SK-N-SH (cell line): ENCODE measurements at regions of chr1 and their contacts with region 1.

Region 1: GRCh38 chr1:48202030-48202752 is 20.3 kb upstream of the SLC5A9 start:
- DNase-seq: peak; percentile 63
- H3K4me3 ChIP-seq: peak overlapping the region in 1 of 2 experiments; percentile 49; a peak in 1 of 4 replicates
- H3K27ac ChIP-seq: no peak overlapping the region
- H3K4me1 ChIP-seq: no peaks in the 10 kb centered on the region
- H3K27me3 ChIP-seq: peaks cover 4% of the 10 kb centered on the region; the same call in 1 of the 2 replicates
- CTCF ChIP-seq: peak; percentile 91
- EP300 ChIP-seq: no peak
- RAD21 ChIP-seq: peak; percentile 82

Region 2: GRCh38 chr1:47738560-47739182 is 463.5 kb before region 1 on chr1:
- CTCF ChIA-PET with region 1: interaction called, 11 read pairs
- POLR2A ChIA-PET with region 1: no interaction called
- DNase-seq: peak; percentile 74
- H3K4me3 ChIP-seq: no peak overlapping the region; a peak in 1 of 4 replicates
- H3K27ac ChIP-seq: no peak overlapping the region
- H3K4me1 ChIP-seq: no peaks in the 10 kb centered on the region
- H3K27me3 ChIP-seq: no peaks in the 10 kb centered on the region
- CTCF ChIP-seq: peak; percentile 70
- EP300 ChIP-seq: no peak
- RAD21 ChIP-seq: peak; percentile 89

Region 3: DNA sequence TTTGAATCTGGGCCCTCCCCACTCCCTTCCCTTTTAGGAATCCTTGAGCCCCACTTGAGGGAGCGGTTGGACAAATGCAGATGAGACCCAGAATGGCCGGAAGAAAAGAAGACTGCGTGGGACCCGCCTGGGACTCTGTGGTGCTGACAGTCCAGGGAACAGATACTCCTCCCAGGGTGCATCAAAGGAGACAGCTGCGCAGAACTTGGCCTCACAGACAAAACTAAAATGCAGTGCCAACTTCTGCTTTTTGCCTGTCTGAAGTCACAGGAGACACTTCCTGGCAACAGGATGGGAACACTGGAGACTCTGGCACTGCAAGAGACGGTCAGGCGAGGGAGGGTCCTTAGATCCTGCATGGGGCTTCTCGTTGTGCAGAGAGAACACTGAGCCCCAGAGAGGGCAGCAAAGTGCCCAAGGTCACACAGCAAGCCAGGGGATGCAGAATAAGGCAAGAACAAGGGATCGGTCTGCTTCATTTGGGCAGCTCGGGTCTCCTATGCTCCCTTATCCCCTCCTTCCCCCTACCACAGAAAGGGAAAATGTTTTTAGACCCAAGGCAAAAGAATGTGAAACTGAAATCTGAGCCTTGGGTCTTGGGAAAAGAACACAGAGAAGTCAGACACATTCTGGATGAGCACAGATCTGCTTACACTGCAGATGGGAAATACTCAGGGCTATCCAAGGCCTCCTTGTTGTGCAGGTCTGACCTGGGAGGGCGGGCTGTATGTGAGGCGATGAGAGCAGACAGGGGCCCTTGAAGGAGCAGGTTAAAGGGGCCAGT is 387.4 kb before region 1 on chr1:
- CTCF ChIA-PET with region 1: no interaction called
- POLR2A ChIA-PET with region 1: no interaction called
- DNase-seq: no peak
- H3K4me3 ChIP-seq: no peak overlapping the region
- H3K27ac ChIP-seq: no peak overlapping the region
- H3K4me1 ChIP-seq: peaks cover 0 to 10% of the 10 kb centered on the region in 2 experiments; a peak in 1 of 4 replicates
- H3K27me3 ChIP-seq: no peaks in the 10 kb centered on the region
- CTCF ChIP-seq: no peak
- EP300 ChIP-seq: no peak
- RAD21 ChIP-seq: no peak

Region 4: GRCh38 chr1:47894713-47895537 is 307.3 kb before region 1 on chr1:
- CTCF ChIA-PET with region 1: no interaction called
- POLR2A ChIA-PET with region 1: no interaction called
- DNase-seq: no peak
- H3K4me3 ChIP-seq: no peak overlapping the region
- H3K27ac ChIP-seq: no peak overlapping the region
- H3K4me1 ChIP-seq: peaks cover 0 to 28% of the 10 kb centered on the region in 2 experiments; a peak in 1 of 4 replicates
- H3K27me3 ChIP-seq: no peaks in the 10 kb centered on the region
- CTCF ChIP-seq: no peak
- EP300 ChIP-seq: no peak
- RAD21 ChIP-seq: no peak

Region 5: DNA sequence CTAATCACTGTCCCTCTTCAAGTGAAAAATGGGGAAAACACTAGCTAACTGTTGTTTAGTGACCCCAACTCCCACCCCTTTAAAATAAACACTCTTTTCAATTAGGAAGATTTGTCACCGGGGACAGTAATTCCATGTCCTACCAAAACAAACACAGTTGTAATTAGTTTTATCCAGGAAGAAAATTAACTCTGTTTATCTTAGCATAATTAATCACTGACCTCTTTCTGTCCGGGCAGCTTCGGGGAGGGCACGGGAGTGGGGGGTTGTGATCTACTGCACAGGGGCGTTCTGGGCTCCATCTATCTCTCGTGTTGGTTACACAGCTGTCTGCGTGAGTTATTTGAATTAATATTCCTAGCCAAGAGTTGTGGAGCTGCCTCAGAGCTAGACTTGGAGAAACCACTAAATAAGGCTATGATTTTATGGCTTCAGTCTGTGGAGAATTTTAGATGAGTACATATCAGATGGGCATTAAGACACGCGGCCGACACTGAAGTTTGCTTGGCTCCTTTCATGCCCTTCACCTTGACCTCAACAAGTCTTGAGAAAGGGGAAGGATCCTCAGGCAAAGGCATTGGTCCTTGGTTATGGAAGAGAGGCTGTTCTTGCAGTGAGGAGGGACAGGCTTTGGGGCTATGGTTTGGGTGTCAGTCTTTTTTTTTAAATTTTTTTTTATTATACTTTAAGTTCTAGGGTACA is 103.0 kb before region 1 on chr1:
- CTCF ChIA-PET with region 1: interaction called, 76 read pairs
- POLR2A ChIA-PET with region 1: no interaction called
- DNase-seq: no peak
- H3K4me3 ChIP-seq: no peak overlapping the region
- H3K27ac ChIP-seq: no peak overlapping the region
- H3K4me1 ChIP-seq: peaks cover 0 to under 1% of the 10 kb centered on the region in 2 experiments; a peak in 1 of 4 replicates
- H3K27me3 ChIP-seq: peaks cover 5% of the 10 kb centered on the region
- CTCF ChIP-seq: no peak
- EP300 ChIP-seq: no peak
- RAD21 ChIP-seq: no peak

Region 6: GRCh38 chr1:48114596-48115382 is 87.4 kb before region 1 on chr1:
- CTCF ChIA-PET with region 1: interaction called, 191 read pairs
- POLR2A ChIA-PET with region 1: no interaction called
- DNase-seq: no peak
- H3K4me3 ChIP-seq: no peak overlapping the region
- H3K27ac ChIP-seq: no peak overlapping the region
- H3K4me1 ChIP-seq: no peaks in the 10 kb centered on the region
- H3K27me3 ChIP-seq: no peaks in the 10 kb centered on the region; the same call in 1 of the 2 replicates
- CTCF ChIP-seq: no peak
- EP300 ChIP-seq: no peak
- RAD21 ChIP-seq: no peak

Region 7: DNA sequence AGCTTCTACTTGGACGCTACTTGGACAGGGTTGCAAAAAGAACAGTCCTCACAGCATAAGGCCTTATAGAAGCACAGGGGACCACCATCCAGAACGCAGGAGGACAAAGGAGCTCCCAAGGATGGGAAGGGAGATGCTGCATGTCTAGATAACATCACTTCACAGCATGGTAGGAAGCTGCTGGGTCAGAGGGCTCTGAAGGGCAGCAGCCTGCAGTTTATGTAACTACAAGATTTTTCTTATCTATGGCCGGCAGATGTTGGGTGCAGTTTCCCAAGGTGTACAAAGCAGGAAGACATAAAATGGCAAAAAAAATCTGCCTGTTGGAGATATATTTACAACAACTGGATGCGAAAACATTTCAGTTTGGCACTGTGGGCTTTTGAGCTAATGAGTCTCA is 24.9 kb before region 1 on chr1:
- CTCF ChIA-PET with region 1: interaction called, 14 read pairs
- POLR2A ChIA-PET with region 1: no interaction called
- DNase-seq: no peak
- H3K4me3 ChIP-seq: no peak overlapping the region
- H3K27ac ChIP-seq: no peak overlapping the region
- H3K4me1 ChIP-seq: no peaks in the 10 kb centered on the region
- H3K27me3 ChIP-seq: no peaks in the 10 kb centered on the region
- CTCF ChIP-seq: no peak
- EP300 ChIP-seq: no peak
- RAD21 ChIP-seq: no peak; the same call in 1 of the 2 replicates

Region 8: DNA sequence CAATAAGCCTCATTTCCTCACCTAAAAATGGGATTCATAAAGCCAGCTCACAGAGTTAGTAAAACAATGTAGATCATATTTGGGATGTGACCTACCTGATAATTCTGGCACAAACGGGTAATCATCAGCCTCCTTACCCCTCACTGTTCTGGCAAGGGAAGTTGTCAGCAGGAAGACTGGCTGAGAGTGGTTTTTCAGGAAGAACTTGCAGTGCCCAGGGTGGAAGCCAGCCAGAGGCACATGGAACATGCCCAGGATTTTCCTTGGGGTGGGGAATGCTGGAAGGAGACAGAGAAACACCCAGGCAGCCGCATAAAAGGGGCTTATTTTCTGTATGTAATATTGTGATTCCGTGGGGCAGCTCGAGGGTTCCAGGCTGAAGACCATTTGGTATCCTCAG is 12.6 kb after region 1 on chr1:
- CTCF ChIA-PET with region 1: interaction called, 19 read pairs
- POLR2A ChIA-PET with region 1: no interaction called
- DNase-seq: no peak
- H3K4me3 ChIP-seq: no peak overlapping the region
- H3K27ac ChIP-seq: no peak overlapping the region
- H3K4me1 ChIP-seq: no peaks in the 10 kb centered on the region
- H3K27me3 ChIP-seq: peaks cover 8% of the 10 kb centered on the region; the same call in 1 of the 2 replicates
- CTCF ChIP-seq: no peak
- EP300 ChIP-seq: no peak
- RAD21 ChIP-seq: no peak

Region 9: DNA sequence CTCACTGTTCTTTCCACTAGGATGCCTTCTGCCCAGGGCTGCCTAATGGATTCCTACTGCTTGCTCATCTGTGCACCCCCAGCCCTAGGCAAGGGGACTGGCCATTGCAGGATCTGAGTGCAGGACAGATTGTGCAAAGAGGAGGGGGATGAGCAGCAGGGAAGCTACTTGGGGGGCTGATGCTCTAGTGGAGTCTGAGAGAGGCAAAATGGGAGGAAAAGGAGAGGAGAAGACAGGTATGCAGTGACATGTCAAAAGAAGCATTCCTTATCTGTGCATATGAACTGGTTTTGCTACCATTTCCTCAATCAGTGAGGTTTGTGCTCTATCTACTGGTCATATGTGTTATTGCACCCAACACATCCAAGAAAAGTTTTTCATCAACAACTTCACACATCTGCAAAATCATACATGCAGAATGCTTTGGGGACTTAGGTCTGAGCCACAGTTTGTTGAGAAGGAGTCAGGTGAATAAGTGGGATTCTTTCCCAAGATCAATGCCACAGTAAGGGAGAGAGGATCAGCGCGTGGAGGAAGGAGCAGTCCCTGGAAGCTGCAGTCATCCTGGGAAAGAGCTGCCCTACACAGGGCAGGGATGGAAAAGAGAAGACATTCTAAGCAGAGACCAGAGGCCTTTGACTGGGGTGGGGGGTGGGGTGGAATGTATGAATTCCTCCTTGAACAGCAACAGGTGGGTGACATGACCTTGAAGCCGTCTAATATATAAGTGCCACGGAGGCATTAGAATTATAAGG is 34.7 kb after region 1 on chr1:
- CTCF ChIA-PET with region 1: interaction called, 13 read pairs
- POLR2A ChIA-PET with region 1: interaction called, 3 read pairs
- DNase-seq: peak; percentile 62
- H3K4me3 ChIP-seq: no peak overlapping the region
- H3K27ac ChIP-seq: no peak overlapping the region
- H3K4me1 ChIP-seq: no peaks in the 10 kb centered on the region; a peak in 1 of 4 replicates
- H3K27me3 ChIP-seq: no peaks in the 10 kb centered on the region
- CTCF ChIP-seq: peak; percentile 59
- EP300 ChIP-seq: no peak
- RAD21 ChIP-seq: peak; percentile 81

Region 10: GRCh38 chr1:48480504-48480903 is 278.3 kb after region 1 on chr1:
- CTCF ChIA-PET with region 1: no interaction called
- POLR2A ChIA-PET with region 1: no interaction called
- DNase-seq: no peak
- H3K4me3 ChIP-seq: no peak overlapping the region
- H3K27ac ChIP-seq: no peak overlapping the region
- H3K4me1 ChIP-seq: no peaks in the 10 kb centered on the region
- H3K27me3 ChIP-seq: no peaks in the 10 kb centered on the region
- CTCF ChIP-seq: no peak
- EP300 ChIP-seq: no peak
- RAD21 ChIP-seq: no peak

Region 11: GRCh38 chr1:49293016-49293415 is 1090.8 kb after region 1 on chr1:
- CTCF ChIA-PET with region 1: no interaction called
- POLR2A ChIA-PET with region 1: no interaction called
- DNase-seq: no peak
- H3K4me3 ChIP-seq: no peak overlapping the region
- H3K27ac ChIP-seq: no peak overlapping the region
- H3K4me1 ChIP-seq: peaks cover 0 to 4% of the 10 kb centered on the region in 2 experiments; a peak in 1 of 4 replicates
- H3K27me3 ChIP-seq: no peaks in the 10 kb centered on the region
- CTCF ChIP-seq: no peak
- EP300 ChIP-seq: no peak
- RAD21 ChIP-seq: no peak